ENCODE measurements at regions of chr1 and their contacts with region 1.

Region 1: DNA sequence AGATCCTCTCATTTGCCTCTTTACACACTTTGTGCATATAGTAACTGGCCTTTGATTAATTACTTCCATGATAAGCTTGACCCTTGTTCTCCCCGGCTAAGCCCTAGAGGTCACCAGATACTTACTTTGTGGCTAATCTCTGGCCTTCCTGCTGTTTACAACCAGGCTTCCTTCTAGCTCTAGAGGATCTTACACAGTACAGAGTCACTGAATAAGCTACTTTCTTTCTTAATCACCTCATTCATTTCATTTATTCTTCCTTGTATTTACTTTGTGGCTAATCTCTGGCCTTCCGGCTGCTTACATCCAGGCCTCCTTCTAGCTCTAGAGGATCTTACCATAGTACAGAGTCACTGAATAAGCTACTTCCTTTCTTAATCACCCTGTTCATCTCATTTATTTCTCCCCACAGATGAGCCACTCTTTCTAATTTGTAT is 144.3 kb upstream of the C1orf21 start:
- DNase-seq: peak; percentile 62
- ATAC-seq: peak; percentile 96
- H3K4me3 ChIP-seq: no peak overlapping the region
- H3K27ac ChIP-seq: peak overlapping the region; percentile 27
- H3K4me1 ChIP-seq: peaks cover 14% of the 10 kb centered on the region
- H3K27me3 ChIP-seq: no peaks in the 10 kb centered on the region
- CTCF ChIP-seq: 0 out of 2 replicates have a peak, but pooled peaks have one; percentile 22

Region 2: DNA sequence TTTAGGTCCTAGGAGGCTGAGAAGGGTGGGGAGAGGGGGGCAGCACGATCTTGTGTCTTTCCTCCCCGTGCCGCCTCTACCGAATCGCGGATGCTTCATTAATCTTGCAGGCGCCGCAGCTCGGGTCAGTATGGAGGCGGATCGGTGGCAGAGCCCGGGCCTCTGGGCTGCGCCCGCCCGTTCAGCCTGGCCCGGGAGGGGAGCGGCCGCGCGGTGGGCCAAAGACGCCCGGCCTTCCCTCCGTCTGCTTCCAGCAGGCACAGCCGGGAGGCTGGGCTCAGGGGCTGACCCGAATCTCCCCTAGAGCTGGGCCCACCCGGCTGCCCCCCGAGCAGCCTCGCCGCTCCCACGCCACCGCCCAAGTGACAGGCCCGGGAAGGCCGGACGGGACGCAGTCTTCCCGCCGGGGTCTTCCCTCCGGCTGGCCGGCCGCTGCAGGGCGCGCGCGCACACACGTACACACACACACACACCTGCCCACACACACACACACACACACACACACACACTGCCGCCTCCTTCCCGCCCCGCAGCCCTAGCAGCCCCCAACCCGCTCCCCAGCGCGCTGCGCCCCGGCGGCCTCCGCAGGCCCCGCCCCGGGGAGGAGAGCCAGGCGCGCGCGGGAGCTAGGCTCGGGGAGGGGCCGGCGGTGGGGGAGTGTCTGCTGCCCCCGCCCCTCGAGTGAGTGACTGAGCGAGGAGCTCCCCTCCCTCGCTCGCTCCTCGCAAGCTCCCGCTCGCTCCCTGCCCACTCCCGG is 144.0 kb after region 1 on chr1 and contains the start of gene C1orf21:
- CTCF ChIA-PET with region 1: interaction called, 3 read pairs
- POLR2A ChIA-PET with region 1: no interaction called
- intact Hi-C with region 1: loop called (anchors 10 kb)
- DNase-seq: peak; percentile 73
- ATAC-seq: peak; percentile 78
- H3K4me3 ChIP-seq: peak within 1 kb of the TSS; percentile 90
- H3K27ac ChIP-seq: no peak within 1 kb of the TSS
- H3K4me1 ChIP-seq: peaks cover 10% of the 10 kb centered on the region; the same call in 1 of the 2 replicates
- H3K27me3 ChIP-seq: no peaks in the 10 kb centered on the region
- CTCF ChIP-seq: no peak
- total RNA-seq, gene C1orf21: 1.3 and 7.3 TPM in 2 replicates

Measured in PC-3 (cell line).